WTC11 (cell line): ENCODE measurements at regions of chr2 and their contacts with region 1.

Region 1: DNA sequence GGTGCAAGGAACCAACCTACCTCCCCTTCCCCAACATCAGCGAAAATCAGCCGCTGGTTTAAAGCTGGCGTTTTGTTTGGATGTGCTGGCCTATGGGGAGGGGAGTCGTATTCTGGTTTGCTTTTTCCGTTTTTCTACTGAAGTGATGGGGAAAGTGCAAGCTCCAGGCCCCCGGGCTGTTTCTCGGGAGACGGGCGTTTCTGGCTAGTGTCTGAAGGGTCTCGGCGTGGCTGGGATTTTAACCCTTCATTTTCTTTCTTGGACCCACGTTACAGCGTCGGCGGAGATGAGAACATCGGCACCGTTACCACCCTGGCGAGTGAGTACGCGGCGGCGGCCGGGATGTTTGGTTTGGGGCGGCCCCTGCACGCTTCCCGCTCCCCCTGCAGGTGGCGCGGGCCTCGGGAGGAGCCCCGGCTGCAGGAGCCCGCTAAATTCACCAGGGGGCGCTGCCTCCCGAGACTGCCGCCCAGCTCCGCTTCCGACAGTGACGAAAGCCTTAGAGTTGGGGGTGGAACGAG is 70.7 kb downstream of the PLB1 start:
- DNase-seq: peak; percentile 90
- ATAC-seq: peak; percentile 97
- H3K4me3 Mint-ChIP-seq: peak overlapping the region; percentile 86
- H3K27ac Mint-ChIP-seq: no peak overlapping the region
- H3K4me1 Mint-ChIP-seq: peaks cover 14% of the 10 kb centered on the region
- H3K27me3 Mint-ChIP-seq: peaks cover 12% of the 10 kb centered on the region
- CTCF ChIP-seq: peak; percentile 98

Region 2: DNA sequence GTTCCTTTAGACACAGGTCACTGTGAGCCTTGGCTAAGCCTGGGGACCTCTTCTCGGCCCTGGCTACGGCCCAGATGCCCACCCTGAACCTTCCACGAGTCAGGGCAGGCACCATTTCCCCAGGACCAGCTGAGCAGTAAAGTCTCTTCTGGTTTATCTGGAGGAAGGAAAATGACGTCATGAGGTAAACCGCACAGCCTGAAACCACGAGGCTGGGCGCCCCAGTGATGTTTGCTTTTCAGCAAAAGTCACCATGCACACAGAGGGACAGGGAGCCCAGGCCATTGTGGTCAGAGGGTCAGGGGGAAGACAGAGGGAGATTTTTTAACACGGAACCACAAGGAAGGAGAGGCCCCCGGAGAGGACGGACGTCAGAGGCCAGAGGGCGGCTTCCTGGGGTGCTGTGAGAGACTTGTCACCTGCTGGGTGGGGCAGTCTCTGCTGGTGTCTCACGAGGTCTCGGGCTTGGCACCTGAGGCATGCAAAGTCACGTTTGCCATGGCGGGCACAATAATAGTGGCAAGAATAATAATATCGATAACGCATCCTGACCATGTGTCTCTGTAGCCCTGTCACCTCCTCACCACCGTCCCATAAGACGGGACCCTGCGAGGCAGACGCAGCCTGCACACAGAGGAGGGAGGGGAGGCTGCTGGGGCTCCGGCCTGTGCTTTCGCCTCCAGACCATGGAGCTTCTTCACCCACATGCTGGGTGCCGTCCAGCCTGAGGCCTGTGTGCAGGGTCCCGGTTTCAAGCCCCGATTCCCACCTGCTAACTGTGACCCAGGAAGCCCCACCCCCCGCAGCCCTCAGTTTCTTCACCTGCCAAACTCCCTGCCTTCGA is 207.1 kb before region 1 on chr2:
- CTCF ChIA-PET with region 1: no interaction called
- POLR2A ChIA-PET with region 1: no interaction called
- DNase-seq: no peak
- ATAC-seq: no peak
- H3K4me3 Mint-ChIP-seq: no peak overlapping the region
- H3K27ac Mint-ChIP-seq: no peak overlapping the region; the same call in 1 of the 2 replicates
- H3K4me1 Mint-ChIP-seq: peaks cover 17% of the 10 kb centered on the region
- H3K27me3 Mint-ChIP-seq: peaks cover 6% of the 10 kb centered on the region; the same call in 1 of the 2 replicates
- CTCF ChIP-seq: no peak

Region 3: GRCh38 chr2:28583899-28584553 is 17.4 kb after region 1 on chr2:
- CTCF ChIA-PET with region 1: interaction called, 13 read pairs
- POLR2A ChIA-PET with region 1: no interaction called
- DNase-seq: no peak
- ATAC-seq: peak; percentile 52
- H3K4me3 Mint-ChIP-seq: no peak overlapping the region
- H3K27ac Mint-ChIP-seq: no peak overlapping the region
- H3K4me1 Mint-ChIP-seq: no peaks in the 10 kb centered on the region
- H3K27me3 Mint-ChIP-seq: no peaks in the 10 kb centered on the region
- CTCF ChIP-seq: no peak

Region 4: GRCh38 chr2:28631514-28632206 is 65.1 kb after region 1 on chr2:
- CTCF ChIA-PET with region 1: interaction called, 12 read pairs
- POLR2A ChIA-PET with region 1: no interaction called
- DNase-seq: no peak
- ATAC-seq: no peak
- H3K4me3 Mint-ChIP-seq: no peak overlapping the region
- H3K27ac Mint-ChIP-seq: no peak overlapping the region
- H3K4me1 Mint-ChIP-seq: no peaks in the 10 kb centered on the region
- H3K27me3 Mint-ChIP-seq: no peaks in the 10 kb centered on the region
- CTCF ChIP-seq: no peak

Region 5: DNA sequence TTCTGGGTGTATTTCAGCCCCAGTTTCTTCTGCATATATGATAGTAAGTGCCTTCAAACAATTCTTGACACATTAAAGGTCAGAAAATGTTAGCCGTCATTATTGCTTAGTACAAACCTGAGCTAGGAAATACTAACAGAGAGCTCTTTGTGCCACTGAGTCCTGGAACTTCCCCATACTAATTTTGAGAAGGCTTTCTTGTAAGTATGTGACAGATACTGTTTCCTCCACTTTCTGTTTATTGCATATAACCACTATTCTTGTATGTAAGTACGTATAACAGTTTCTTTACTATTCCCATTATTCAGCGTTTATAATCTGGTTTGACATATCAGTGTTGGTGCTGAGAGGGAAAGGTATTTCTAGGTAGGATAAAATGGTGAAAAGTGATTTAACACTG is 194.8 kb after region 1 on chr2:
- CTCF ChIA-PET with region 1: interaction called, 11 read pairs
- POLR2A ChIA-PET with region 1: no interaction called
- DNase-seq: no peak
- ATAC-seq: no peak
- H3K4me3 Mint-ChIP-seq: no peak overlapping the region
- H3K27ac Mint-ChIP-seq: peak overlapping the region; percentile 27; the same call in 1 of the 2 replicates
- H3K4me1 Mint-ChIP-seq: peaks cover 15% of the 10 kb centered on the region
- H3K27me3 Mint-ChIP-seq: no peaks in the 10 kb centered on the region
- CTCF ChIP-seq: no peak

Region 6: DNA sequence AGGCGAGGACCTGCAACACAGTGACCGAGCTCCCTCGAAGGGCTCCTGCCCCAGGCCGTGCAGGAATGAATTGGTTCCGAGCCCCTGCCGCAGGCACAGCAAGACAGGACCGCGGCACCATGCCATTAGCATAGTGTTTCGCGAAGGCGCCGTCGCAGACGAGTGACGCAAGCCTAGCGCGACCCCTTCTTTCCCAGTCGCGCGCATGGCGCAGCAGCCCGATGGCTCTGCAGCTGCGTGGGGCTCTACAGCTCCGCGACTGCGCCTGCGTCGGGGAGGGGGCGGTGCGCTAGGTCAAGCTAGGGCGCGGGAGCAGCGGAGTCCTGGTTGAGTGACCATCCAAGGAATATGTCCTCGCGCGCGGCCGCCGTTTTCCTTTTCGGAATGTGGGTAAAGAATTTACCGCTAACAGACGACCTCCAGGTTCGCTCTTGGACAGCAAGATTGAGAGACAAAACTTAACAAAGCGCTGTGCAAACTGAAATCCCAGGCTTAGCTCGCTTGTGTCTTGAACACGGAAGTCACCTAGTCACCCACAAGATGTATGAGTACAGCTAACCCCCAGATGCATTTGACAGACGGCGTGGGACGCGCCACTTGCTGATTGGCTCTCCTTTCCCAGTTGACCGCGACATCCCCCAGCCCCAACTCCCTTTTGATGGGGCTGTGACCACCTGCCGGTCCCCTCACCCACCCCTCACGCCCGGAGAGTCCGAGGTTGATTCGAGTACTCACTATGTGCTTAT is 303.7 kb after region 1 on chr2 and contains the start of gene TRMT61B:
- CTCF ChIA-PET with region 1: interaction called, 10 read pairs
- POLR2A ChIA-PET with region 1: no interaction called
- DNase-seq: peak; percentile 98
- ATAC-seq: peak; percentile 98
- H3K4me3 Mint-ChIP-seq: peak within 1 kb of the TSS; percentile 100
- H3K27ac Mint-ChIP-seq: peak within 1 kb of the TSS; percentile 98
- H3K4me1 Mint-ChIP-seq: peaks cover 12% of the 10 kb centered on the region
- H3K27me3 Mint-ChIP-seq: peaks cover 21% of the 10 kb centered on the region
- CTCF ChIP-seq: no peak
- total RNA-seq, gene TRMT61B: 24.0 to 26.4 TPM (median 24.3 TPM) in 3 replicates

Region 7: GRCh38 chr2:29053670-29054400 is 487.3 kb after region 1 on chr2:
- CTCF ChIA-PET with region 1: no interaction called
- POLR2A ChIA-PET with region 1: no interaction called
- DNase-seq: no peak
- ATAC-seq: peak; percentile 32
- H3K4me3 Mint-ChIP-seq: no peak overlapping the region
- H3K27ac Mint-ChIP-seq: peak overlapping the region; percentile 23; the same call in 1 of the 2 replicates
- H3K4me1 Mint-ChIP-seq: peaks cover 19% of the 10 kb centered on the region
- H3K27me3 Mint-ChIP-seq: no peaks in the 10 kb centered on the region
- CTCF ChIP-seq: no peak

Region 8: DNA sequence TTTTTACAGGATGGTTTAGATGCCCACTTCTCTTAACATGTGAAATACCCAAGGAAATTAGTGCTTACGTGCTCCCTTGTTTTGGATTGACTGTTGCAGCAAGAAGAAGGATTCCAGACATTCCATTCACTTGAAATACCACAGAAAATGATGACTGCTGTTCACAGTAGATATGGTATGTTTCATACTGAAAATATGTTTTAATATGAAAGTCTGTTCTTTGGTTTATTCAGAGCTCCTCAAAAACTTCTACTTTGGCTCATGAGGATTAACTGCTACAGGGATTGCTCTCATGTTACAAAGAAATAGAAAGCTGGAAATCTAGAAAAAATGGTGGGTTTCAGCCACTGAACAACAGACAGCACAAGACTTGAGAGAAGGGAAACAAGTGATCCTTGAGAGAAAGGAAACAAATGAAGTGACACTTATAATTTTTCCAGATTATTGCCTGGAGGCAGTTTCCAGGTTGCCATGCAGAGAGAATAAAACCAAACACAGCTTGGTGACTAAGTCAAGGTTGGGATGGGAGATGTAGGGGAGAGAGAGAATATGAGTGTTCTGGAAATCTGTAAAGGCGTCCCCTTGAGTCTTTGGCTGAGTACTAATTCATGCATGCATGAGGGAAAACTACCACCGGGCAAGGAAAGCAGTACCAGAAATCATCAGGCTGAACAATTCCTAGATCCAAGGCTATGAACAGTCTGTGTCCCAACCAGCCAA is 896.8 kb after region 1 on chr2:
- CTCF ChIA-PET with region 1: no interaction called
- POLR2A ChIA-PET with region 1: no interaction called
- DNase-seq: no peak
- ATAC-seq: no peak
- H3K4me3 Mint-ChIP-seq: no peak overlapping the region
- H3K27ac Mint-ChIP-seq: no peak overlapping the region
- H3K4me1 Mint-ChIP-seq: peaks cover 7% of the 10 kb centered on the region; the same call in 1 of the 2 replicates
- H3K27me3 Mint-ChIP-seq: no peaks in the 10 kb centered on the region
- CTCF ChIP-seq: no peak